GM12878 (cell line): ENCODE measurements at regions of chr17 and their contacts with region 1.

Region 1: GRCh38 chr17:55513885-55514591 is 2.8 kb upstream of the SMIM36 start:
- DNase-seq: peak; percentile 59
- ATAC-seq: peak; percentile 91
- H3K4me3 ChIP-seq: no peak overlapping the region
- H3K27ac ChIP-seq: no peak overlapping the region
- H3K4me1 ChIP-seq: no peaks in the 10 kb centered on the region
- H3K27me3 ChIP-seq: no peaks in the 10 kb centered on the region
- CTCF ChIP-seq: peak; percentile 82 to 91 (median 90)
- EP300 ChIP-seq: no peak
- POLR2A ChIP-seq: no peak
- RAD21 ChIP-seq: peak; percentile 99

Region 2: DNA sequence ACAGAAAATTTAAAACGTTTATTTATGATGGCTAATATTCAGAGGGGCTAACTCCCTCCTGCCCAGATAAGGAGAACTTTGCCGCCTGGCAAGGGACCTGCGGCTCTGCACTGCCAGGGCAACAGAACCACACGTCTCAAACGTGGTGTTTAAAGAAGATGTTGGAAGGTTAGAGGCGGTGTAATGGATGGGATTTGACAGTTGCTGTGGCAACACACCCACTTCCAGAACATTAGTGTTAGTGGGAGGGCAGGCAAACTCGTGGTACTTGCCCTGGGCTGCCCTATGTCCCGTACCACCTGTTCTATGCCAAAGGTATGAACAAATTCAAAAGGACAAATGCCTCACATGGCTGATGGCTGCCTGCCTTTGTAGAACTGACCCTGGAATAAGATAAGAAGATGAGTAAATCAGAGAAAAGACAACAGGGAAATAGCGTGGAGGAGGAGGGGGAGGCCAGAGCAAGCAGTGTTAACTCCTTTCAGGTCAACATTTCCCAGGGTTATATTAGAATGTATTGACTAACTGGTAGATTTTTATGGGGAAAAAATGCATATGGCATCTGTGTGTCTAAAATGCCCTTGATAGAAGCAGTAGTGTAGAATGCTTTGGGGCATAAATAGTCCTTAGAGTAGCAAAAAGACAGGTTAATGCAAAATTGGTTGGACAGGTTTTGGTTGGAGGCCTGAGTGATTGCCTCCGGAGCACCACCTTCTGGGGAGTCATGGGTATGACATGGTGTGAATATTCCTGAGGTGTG is 218.4 kb before region 1 on chr17:
- CTCF ChIA-PET with region 1: interaction called, 4 read pairs
- POLR2A ChIA-PET with region 1: no interaction called
- RAD21 ChIA-PET with region 1: no interaction called
- SMC1A ChIA-PET with region 1: interaction called, 3 read pairs
- in situ Hi-C with region 1: no loop called
- intact Hi-C with region 1: loop called (anchors 2 kb)
- DNase-seq: no peak
- ATAC-seq: peak; percentile 90
- H3K4me3 ChIP-seq: no peak overlapping the region
- H3K27ac ChIP-seq: no peak overlapping the region
- H3K4me1 ChIP-seq: no peaks in the 10 kb centered on the region
- H3K27me3 ChIP-seq: peaks cover 0 to 1% of the 10 kb centered on the region in 2 experiments; a peak in 2 of 4 replicates
- CTCF ChIP-seq: peak; percentile 79 to 87 (median 85)
- EP300 ChIP-seq: no peak
- POLR2A ChIP-seq: no peak
- RAD21 ChIP-seq: peak; percentile 89

Region 3: DNA sequence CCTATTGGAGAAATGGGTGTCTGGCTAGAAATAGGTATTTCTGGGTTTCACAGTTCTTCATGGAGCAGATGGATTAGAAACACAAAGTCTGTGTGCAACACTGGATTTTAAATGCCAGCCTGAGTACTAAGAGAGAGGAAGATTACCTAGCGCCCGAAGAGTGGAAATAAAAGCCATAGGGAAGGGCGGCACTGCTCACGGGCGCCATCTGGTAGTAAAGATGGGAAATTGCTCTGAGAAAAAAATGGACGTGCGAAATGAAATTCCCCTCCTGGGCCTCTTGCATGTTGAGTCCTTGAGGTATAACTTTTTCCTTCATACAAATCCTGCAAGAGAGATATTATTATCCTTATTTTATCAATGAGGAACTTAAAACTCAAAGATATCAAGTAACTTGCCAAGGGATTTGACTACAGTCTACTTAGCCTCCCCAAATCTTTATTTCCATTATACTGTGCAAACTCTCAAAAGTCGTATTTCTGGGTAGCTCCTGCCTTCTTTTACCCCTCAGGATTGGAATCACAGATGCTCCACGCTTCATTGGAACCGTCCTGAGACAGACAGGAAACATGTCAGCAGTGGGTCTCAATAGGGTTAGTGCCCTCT is 165.2 kb before region 1 on chr17:
- CTCF ChIA-PET with region 1: interaction called, 111 read pairs
- POLR2A ChIA-PET with region 1: no interaction called
- RAD21 ChIA-PET with region 1: interaction called, 57 read pairs
- SMC1A ChIA-PET with region 1: interaction called, 109 read pairs
- in situ Hi-C with region 1: no loop called
- intact Hi-C with region 1: no loop called
- DNase-seq: no peak
- ATAC-seq: peak; percentile 79
- H3K4me3 ChIP-seq: no peak overlapping the region
- H3K27ac ChIP-seq: no peak overlapping the region
- H3K4me1 ChIP-seq: no peaks in the 10 kb centered on the region
- H3K27me3 ChIP-seq: no peaks in the 10 kb centered on the region
- CTCF ChIP-seq: peak; percentile 84 to 87 (median 87)
- EP300 ChIP-seq: no peak
- POLR2A ChIP-seq: no peak
- RAD21 ChIP-seq: peak; percentile 70

Region 4: GRCh38 chr17:55356434-55357328 is 157.4 kb before region 1 on chr17:
- CTCF ChIA-PET with region 1: interaction called, 111 read pairs
- POLR2A ChIA-PET with region 1: no interaction called
- RAD21 ChIA-PET with region 1: interaction called, 57 read pairs
- SMC1A ChIA-PET with region 1: interaction called, 109 read pairs
- in situ Hi-C with region 1: loop called (anchors 5 kb)
- intact Hi-C with region 1: loop called (anchors 1 kb)
- DNase-seq: peak; percentile 28
- ATAC-seq: peak; percentile 100
- H3K4me3 ChIP-seq: no peak overlapping the region
- H3K27ac ChIP-seq: no peak overlapping the region
- H3K4me1 ChIP-seq: no peaks in the 10 kb centered on the region
- H3K27me3 ChIP-seq: no peaks in the 10 kb centered on the region; a peak in 1 of 4 replicates
- CTCF ChIP-seq: peak; percentile 74 to 87 (median 84)
- EP300 ChIP-seq: no peak
- POLR2A ChIP-seq: no peak
- RAD21 ChIP-seq: peak; percentile 71

Region 5: GRCh38 chr17:55366020-55366481 is 148.0 kb before region 1 on chr17:
- CTCF ChIA-PET with region 1: interaction called, 111 read pairs
- POLR2A ChIA-PET with region 1: no interaction called
- RAD21 ChIA-PET with region 1: interaction called, 4 read pairs
- SMC1A ChIA-PET with region 1: interaction called, 109 read pairs
- in situ Hi-C with region 1: no loop called
- intact Hi-C with region 1: no loop called
- DNase-seq: no peak
- ATAC-seq: no peak
- H3K4me3 ChIP-seq: no peak overlapping the region
- H3K27ac ChIP-seq: no peak overlapping the region
- H3K4me1 ChIP-seq: no peaks in the 10 kb centered on the region
- H3K27me3 ChIP-seq: no peaks in the 10 kb centered on the region
- CTCF ChIP-seq: no peak
- EP300 ChIP-seq: no peak
- POLR2A ChIP-seq: no peak
- RAD21 ChIP-seq: no peak

Region 6: GRCh38 chr17:55437159-55437605 is 76.9 kb before region 1 on chr17:
- CTCF ChIA-PET with region 1: interaction called, 5 read pairs
- POLR2A ChIA-PET with region 1: interaction called, 5 read pairs
- RAD21 ChIA-PET with region 1: interaction called, 11 read pairs
- SMC1A ChIA-PET with region 1: interaction called, 4 read pairs
- in situ Hi-C with region 1: no loop called
- intact Hi-C with region 1: loop called (anchors 5 kb)
- DNase-seq: peak; percentile 93
- ATAC-seq: peak; percentile 71
- H3K4me3 ChIP-seq: peak overlapping the region; percentile 36
- H3K27ac ChIP-seq: peak overlapping the region; percentile 72
- H3K4me1 ChIP-seq: peaks cover 23% of the 10 kb centered on the region
- H3K27me3 ChIP-seq: no peaks in the 10 kb centered on the region
- CTCF ChIP-seq: no peak
- EP300 ChIP-seq: peak; percentile 4 to 70; a peak in 2 of 4 replicates
- POLR2A ChIP-seq: no peak
- RAD21 ChIP-seq: peak; percentile 25; the same call in 1 of the 2 replicates

Region 7: GRCh38 chr17:55466671-55467070 is 47.4 kb before region 1 on chr17:
- CTCF ChIA-PET with region 1: interaction called, 4 read pairs
- POLR2A ChIA-PET with region 1: no interaction called
- RAD21 ChIA-PET with region 1: interaction called, 4 read pairs
- SMC1A ChIA-PET with region 1: interaction called, 6 read pairs
- in situ Hi-C with region 1: no loop called
- intact Hi-C with region 1: loop called (anchors 5 kb)
- DNase-seq: peak; percentile 55
- ATAC-seq: peak; percentile 51
- H3K4me3 ChIP-seq: no peak overlapping the region
- H3K27ac ChIP-seq: no peak overlapping the region
- H3K4me1 ChIP-seq: peaks cover 18% of the 10 kb centered on the region
- H3K27me3 ChIP-seq: no peaks in the 10 kb centered on the region
- CTCF ChIP-seq: no peak
- EP300 ChIP-seq: no peak
- POLR2A ChIP-seq: no peak
- RAD21 ChIP-seq: no peak

Region 8: GRCh38 chr17:56441331-56441730 is 927.3 kb after region 1 on chr17:
- CTCF ChIA-PET with region 1: no interaction called
- POLR2A ChIA-PET with region 1: no interaction called
- RAD21 ChIA-PET with region 1: no interaction called
- SMC1A ChIA-PET with region 1: no interaction called
- in situ Hi-C with region 1: no loop called
- intact Hi-C with region 1: no loop called
- DNase-seq: no peak
- ATAC-seq: no peak
- H3K4me3 ChIP-seq: no peak overlapping the region
- H3K27ac ChIP-seq: no peak overlapping the region
- H3K4me1 ChIP-seq: no peaks in the 10 kb centered on the region
- H3K27me3 ChIP-seq: peaks cover 1 to 2% of the 10 kb centered on the region in 2 experiments; a peak in 2 of 4 replicates
- CTCF ChIP-seq: no peak
- EP300 ChIP-seq: no peak
- POLR2A ChIP-seq: no peak
- RAD21 ChIP-seq: no peak